ENCODE measurements at regions of chr12 and their contacts with region 1.

Region 1: DNA sequence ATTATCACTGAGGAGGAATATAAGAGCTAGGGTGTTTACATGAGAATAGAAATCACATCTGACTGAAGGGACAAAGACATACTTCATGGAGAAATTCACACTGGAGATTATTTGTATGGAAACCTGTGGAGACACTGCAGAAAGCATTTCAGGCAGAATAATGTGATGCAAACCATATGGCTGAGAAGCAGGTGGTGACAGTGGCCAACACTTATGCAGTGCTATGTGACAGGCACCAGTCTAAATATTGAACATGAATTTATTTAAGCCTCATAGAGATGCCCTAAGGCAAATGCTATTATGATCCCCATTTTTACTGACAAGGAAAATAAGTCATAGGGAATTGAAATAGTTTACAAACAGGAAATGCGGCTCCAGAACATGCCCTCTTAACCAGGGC is 16.2 kb downstream of the ALG10B start:
- DNase-seq: no peak
- CTCF ChIP-seq: no peak

Region 2: DNA sequence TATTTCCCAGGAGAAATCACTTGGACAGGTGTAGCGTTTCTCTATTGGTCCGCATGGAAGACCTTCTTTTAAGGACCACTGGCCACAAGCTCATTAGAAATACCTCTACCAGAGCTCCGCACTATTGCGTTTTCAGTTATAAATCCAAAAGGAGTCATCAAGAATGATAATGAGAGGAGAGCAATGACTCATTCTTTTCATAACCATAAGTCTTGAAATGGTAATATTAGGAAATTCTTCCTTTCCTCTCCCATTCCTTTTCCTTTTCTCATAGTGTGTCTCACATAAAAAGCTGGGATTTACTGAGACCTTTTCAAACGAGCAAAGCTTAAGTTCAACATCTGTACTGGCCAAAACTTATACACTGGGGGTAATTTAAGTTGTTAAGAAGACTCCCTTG is 356.9 kb after region 1 on chr12:
- in situ Hi-C with region 1: loop called (anchors 25 kb)
- DNase-seq: no peak
- CTCF ChIP-seq: no peak

Region 3: DNA sequence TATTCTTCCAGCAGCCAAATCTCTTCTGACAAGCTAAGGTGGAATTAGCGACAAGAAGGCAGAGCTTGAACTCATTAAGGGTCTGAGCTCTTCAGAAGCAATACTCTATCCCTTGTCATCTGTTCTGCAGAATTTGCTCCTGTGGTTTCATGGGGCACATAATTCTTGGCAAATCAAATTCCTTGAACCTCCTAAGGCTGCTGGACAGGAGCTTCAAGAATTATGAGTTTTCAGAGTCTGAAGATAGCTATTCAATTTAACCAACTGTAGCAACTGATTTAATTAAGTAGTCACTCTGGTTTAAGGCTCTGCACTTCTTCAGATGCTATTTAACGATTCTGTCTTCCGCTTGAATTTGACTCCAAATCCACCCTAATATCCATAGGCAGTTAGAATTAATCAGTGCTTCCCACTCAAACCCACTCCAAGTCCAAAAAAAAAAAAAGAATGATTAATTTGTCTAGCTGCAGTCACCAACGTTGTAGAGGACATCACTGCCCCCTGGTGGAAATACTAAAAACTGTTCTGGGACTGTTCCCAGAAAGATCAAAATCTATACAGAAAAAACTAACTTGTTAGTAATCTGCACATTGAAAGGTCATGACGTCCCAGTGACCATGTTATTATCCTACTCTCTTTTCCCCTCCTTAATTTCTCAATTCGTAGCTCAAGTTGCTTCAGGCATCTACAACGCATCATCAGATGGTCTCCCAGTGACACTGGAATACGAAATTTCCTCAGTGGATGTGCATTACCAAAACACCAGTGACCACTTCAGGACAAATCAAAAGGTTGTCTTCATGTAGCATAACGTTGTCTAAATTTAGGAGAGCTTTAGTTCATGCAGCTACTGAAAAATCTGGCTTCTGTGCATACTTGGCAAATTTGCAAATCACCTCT is 940.3 kb after region 1 on chr12:
- in situ Hi-C with region 1: loop called (anchors 25 kb)
- DNase-seq: no peak
- CTCF ChIP-seq: peak; percentile 59

Measured in GM13976 (cell line).